Activated CD8-positive, alpha-beta T cell treated with anti-CD3 and anti-CD28 coated beads for 36 hours (primary cell): ENCODE measurements at regions of chr6 and their contacts with region 1.

Region 1: DNA sequence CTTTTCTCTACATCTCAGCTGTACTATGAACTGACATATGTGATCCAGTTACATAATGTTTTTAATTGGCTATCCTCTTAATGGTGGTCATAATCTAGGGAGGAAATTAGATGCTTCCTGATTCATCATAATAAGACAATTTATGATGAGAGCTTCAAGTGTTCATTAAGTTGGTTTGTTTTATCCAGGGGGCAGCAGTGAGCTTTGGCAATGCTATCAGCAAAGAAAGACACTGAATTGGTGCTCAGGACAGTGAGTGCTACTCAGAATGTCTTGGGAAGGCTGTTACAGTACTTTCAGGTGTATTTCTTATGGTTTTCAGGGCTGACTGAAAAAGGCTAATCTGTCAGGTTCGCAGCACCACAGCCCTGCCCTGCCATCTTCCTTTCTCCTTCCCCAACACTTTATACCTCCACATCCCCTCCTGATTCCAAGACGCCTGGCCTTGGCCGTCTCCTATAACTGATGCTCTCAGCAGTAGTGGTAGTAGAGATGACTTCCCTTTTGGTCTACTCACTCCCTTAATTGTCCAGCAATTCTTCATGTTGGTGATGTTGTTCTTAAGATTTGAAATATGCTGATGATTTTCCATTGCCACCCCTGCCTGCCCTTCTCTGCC is 67.0 kb upstream of the TNFAIP3 start:
- DNase-seq: peak; percentile 85
- ATAC-seq: peak; percentile 77
- H3K4me3 Mint-ChIP-seq: no peak overlapping the region
- H3K27ac Mint-ChIP-seq: peak overlapping the region; percentile 88
- H3K4me1 Mint-ChIP-seq: peaks cover 72% of the 10 kb centered on the region
- H3K27me3 Mint-ChIP-seq: no peaks in the 10 kb centered on the region
- CTCF ChIP-seq: peak; percentile 74

Region 2: DNA sequence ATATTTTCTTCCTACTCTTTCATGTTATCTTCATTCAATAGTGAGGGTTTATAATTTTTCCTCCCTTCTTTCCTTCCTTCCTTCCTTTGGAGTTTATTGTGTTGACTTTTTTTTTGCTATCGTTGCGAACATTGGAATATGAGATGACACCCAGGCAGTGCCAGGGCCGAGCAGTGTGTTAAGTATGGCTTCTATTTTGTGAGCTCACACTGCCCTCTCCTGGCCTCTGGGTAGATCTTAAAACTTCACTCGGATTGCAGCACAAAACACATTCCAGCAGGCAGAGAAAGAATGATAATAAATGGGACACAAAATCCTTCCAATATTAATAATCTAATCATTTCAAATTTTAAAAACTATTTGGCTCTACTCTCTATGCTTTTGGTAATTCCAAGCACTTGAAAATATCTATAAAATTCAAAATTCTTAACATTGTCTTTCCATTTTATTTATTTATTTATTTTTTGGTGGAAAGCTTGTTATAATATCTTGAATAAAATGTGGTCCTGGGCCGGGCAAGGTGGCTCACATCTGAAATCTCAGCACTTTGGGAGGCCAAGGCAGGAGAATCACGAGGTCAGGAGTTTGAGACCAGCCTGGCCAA is 158.5 kb before region 1 on chr6:
- CTCF ChIA-PET with region 1: no interaction called
- POLR2A ChIA-PET with region 1: no interaction called
- intact Hi-C with region 1: no loop called
- DNase-seq: peak; percentile 83
- ATAC-seq: peak; percentile 75
- H3K4me3 Mint-ChIP-seq: no peak overlapping the region
- H3K27ac Mint-ChIP-seq: no peak overlapping the region
- H3K4me1 Mint-ChIP-seq: peaks cover 15% of the 10 kb centered on the region
- H3K27me3 Mint-ChIP-seq: peaks cover 7% of the 10 kb centered on the region
- CTCF ChIP-seq: peak; percentile 90

Region 3: DNA sequence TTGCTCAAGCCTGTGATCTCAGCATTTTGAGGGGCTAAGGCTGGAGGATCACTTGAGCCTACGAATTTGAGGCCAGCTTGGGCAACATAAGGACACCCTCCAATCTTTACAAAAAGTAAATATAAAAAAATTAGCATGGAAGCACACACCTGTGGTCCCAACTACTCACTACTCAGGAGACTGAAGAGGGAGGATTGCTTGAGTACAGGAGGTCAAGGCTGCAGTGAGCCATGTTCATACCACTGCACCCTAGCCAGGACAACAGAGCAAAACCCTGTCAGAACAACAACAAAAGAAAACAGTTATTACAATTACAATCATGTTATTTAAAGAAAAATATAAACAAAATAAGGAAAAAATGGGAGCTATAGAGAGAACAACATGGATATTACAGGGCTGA is 15.5 kb before region 1 on chr6:
- CTCF ChIA-PET with region 1: interaction called, 16 read pairs
- POLR2A ChIA-PET with region 1: interaction called, 5 read pairs
- intact Hi-C with region 1: no loop called
- DNase-seq: no peak
- ATAC-seq: no peak
- H3K4me3 Mint-ChIP-seq: no peak overlapping the region
- H3K27ac Mint-ChIP-seq: no peak overlapping the region
- H3K4me1 Mint-ChIP-seq: peaks cover 2% of the 10 kb centered on the region
- H3K27me3 Mint-ChIP-seq: no peaks in the 10 kb centered on the region
- CTCF ChIP-seq: no peak

Region 4: GRCh38 chr6:137823826-137824555 is 23.9 kb after region 1 on chr6:
- CTCF ChIA-PET with region 1: interaction called, 13 read pairs
- POLR2A ChIA-PET with region 1: interaction called, 5 read pairs
- intact Hi-C with region 1: no loop called
- DNase-seq: peak; percentile 85
- ATAC-seq: peak; percentile 44
- H3K4me3 Mint-ChIP-seq: peak overlapping the region; percentile 60
- H3K27ac Mint-ChIP-seq: peak overlapping the region; percentile 93
- H3K4me1 Mint-ChIP-seq: peaks cover 86% of the 10 kb centered on the region
- H3K27me3 Mint-ChIP-seq: no peaks in the 10 kb centered on the region
- CTCF ChIP-seq: no peak

Region 5: DNA sequence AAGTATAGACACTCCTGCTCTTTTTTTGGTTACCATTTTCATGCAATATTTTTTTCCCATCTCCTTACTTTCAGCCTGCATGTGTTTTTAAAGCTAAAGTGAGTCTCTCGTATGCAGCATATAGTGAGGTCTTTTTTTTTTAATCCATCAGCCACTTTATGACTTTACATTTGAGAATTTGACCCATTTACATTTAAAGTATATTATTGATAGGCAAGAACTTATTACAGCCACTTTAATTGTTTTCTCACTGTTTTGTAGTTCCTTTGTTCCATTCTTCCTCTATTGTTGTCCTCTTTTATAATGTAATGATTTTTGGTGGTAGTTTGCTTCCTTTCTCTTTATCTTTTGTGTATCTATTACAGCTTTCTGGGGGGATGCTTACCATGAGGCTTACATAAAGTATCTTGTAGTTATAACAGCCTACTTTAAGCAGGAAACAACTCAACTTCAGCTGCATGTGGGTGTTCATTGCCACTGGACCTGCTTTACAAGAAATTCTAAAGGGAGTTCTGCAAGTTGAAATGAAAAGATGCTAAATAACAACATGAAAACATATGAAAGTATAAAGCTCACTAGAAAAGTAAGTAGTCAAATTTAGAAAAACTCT is 138.8 kb after region 1 on chr6:
- CTCF ChIA-PET with region 1: interaction called, 18 read pairs
- POLR2A ChIA-PET with region 1: interaction called, 5 read pairs
- intact Hi-C with region 1: loop called (anchors 10 kb)
- DNase-seq: no peak
- ATAC-seq: no peak
- H3K4me3 Mint-ChIP-seq: peak overlapping the region; percentile 39
- H3K27ac Mint-ChIP-seq: peak overlapping the region; percentile 92
- H3K4me1 Mint-ChIP-seq: peaks cover 44% of the 10 kb centered on the region
- H3K27me3 Mint-ChIP-seq: no peaks in the 10 kb centered on the region
- CTCF ChIP-seq: no peak

Region 6: GRCh38 chr6:137975188-137975940 is 175.3 kb after region 1 on chr6:
- CTCF ChIA-PET with region 1: interaction called, 9 read pairs
- POLR2A ChIA-PET with region 1: no interaction called
- intact Hi-C with region 1: loop called (anchors 5 kb)
- DNase-seq: peak; percentile 64
- ATAC-seq: peak; percentile 69
- H3K4me3 Mint-ChIP-seq: peak overlapping the region; percentile 70
- H3K27ac Mint-ChIP-seq: peak overlapping the region; percentile 94
- H3K4me1 Mint-ChIP-seq: peaks cover 70% of the 10 kb centered on the region
- H3K27me3 Mint-ChIP-seq: no peaks in the 10 kb centered on the region
- CTCF ChIP-seq: peak; percentile 82

Region 7: GRCh38 chr6:137989664-137990063 is 189.6 kb after region 1 on chr6:
- CTCF ChIA-PET with region 1: no interaction called
- POLR2A ChIA-PET with region 1: no interaction called
- intact Hi-C with region 1: no loop called
- DNase-seq: no peak
- ATAC-seq: no peak
- H3K4me3 Mint-ChIP-seq: no peak overlapping the region
- H3K27ac Mint-ChIP-seq: no peak overlapping the region
- H3K4me1 Mint-ChIP-seq: no peaks in the 10 kb centered on the region
- H3K27me3 Mint-ChIP-seq: no peaks in the 10 kb centered on the region
- CTCF ChIP-seq: no peak